A549 (cell line): ENCODE measurements at regions of chr3 and their contacts with region 1.

Region 1: DNA sequence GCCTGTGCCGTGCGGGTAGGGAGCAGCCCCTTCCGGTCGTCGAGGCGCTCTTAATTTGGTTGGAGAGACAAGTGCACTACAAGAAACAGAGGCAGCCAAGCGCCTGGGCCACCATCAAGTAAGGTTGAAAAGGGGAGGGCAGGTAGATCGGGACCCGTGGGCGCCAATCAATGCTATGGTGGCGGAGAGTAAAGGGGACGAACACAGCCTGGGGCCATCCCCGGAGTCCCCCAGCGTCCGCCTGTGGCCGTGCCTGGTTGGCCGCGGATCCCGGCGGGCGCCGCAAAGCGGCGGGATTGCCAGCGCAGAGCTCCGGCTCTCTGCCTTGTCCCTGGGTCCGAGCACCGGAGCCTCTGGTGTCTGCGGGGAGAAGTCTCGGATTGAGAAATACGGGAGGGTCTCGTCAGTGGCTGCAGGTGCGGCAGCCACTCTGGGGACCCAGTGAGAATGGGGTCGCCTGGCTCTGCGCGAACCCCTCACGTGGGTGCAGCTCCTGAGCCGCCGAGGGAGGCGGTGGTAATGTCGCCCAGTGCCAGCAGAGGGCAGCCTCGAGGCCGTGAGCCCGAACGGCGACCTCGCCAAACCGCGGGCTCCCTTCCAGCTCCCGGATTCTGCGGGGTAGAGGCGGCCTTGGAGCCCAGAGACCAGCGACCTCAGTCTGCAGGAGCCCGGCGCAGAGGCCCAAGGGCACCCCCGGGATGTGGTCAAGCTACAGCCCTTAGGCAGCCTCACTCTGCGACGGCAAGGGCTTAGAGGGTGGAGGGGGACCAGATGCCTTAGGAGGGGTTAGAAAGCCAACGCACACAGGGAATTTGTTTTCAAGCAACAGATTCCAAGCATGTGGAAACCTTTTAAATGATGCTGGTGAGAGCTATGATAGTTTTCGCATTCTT is 10.8 kb downstream of the FOXL2 start:
- DNase-seq: peak; percentile 64 to 75
- ATAC-seq: peak; percentile 91
- H3K4me3 ChIP-seq: peak overlapping the region; percentile 45
- H3K27ac ChIP-seq: peak overlapping the region; percentile 69 to 93
- H3K4me1 ChIP-seq: no peaks in the 10 kb centered on the region
- CTCF ChIP-seq: peak; percentile 62
- EP300 ChIP-seq: no peak
- POLR2A ChIP-seq: peak; percentile 15; the same call in 1 of the 2 replicates
- RAD21 ChIP-seq: peak; percentile 45 to 47; a peak in 4 of 5 replicates

Region 2: DNA sequence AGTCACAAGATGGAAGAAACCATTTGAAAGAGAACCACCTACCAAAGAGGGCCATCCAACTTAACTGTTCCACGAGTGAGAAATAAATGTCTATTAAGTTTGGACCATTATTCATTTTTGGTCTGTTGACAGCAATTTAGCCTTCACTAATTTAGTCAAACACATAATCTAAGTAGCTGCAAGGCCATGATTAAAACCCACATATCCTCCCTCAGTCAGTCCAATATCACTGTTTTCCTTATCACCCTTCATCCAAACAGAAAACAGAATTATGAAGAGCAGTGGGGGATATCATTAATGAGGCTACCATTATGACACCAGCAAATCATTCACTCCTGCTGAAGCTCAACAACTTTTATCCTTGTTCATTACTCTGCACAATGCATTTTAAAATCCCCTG is 153.3 kb before region 1 on chr3:
- CTCF ChIA-PET with region 1: no interaction called
- POLR2A ChIA-PET with region 1: no interaction called
- DNase-seq: no peak
- ATAC-seq: no peak
- H3K4me3 ChIP-seq: no peak overlapping the region
- H3K27ac ChIP-seq: no peak overlapping the region
- H3K4me1 ChIP-seq: peaks cover 23% of the 10 kb centered on the region
- CTCF ChIP-seq: no peak
- EP300 ChIP-seq: no peak
- POLR2A ChIP-seq: no peak
- RAD21 ChIP-seq: no peak

Region 3: GRCh38 chr3:138888560-138888959 is 47.5 kb before region 1 on chr3:
- CTCF ChIA-PET with region 1: no interaction called
- POLR2A ChIA-PET with region 1: no interaction called
- DNase-seq: no peak
- ATAC-seq: no peak
- H3K4me3 ChIP-seq: no peak overlapping the region
- H3K27ac ChIP-seq: no peak overlapping the region
- H3K4me1 ChIP-seq: no peaks in the 10 kb centered on the region
- CTCF ChIP-seq: no peak
- EP300 ChIP-seq: no peak
- POLR2A ChIP-seq: no peak
- RAD21 ChIP-seq: no peak

Region 4: GRCh38 chr3:138946181-138947059 is 10.3 kb after region 1 on chr3:
- CTCF ChIA-PET with region 1: interaction called, 18 read pairs
- POLR2A ChIA-PET with region 1: interaction called, 8 read pairs
- DNase-seq: peak; percentile 35 to 75
- ATAC-seq: peak; percentile 71 to 77
- H3K4me3 ChIP-seq: peak overlapping the region; percentile 63
- H3K27ac ChIP-seq: peak overlapping the region; percentile 86 to 89
- H3K4me1 ChIP-seq: peaks cover 3% of the 10 kb centered on the region; the same call in 1 of the 3 replicates
- CTCF ChIP-seq: peak; percentile 39; the same call in 2 of the 3 replicates
- EP300 ChIP-seq: no peak
- POLR2A ChIP-seq: no peak
- RAD21 ChIP-seq: 0 out of 5 replicates have a peak, but pooled peaks of 1 of the 2 experiments have one; percentile 23

Region 5: DNA sequence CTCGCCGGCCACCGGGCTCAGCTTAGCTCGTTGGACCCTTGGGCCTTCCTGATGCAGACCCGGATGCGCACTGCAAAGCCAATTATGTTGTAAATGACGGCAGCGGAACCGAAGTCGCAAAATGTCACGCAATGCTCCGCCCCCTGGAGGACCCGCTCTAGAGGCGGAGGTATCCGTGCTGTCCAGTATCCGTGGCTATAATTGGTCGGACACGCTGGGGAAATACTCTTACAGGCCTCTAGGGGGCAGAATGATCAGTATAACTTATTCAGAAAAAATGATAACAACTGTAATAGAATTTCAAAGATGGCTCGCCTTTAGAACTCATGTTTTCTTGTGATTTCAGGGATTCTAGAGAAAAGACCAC is 84.8 kb after region 1 on chr3 and contains the start of gene PRR23B:
- CTCF ChIA-PET with region 1: no interaction called
- POLR2A ChIA-PET with region 1: no interaction called
- DNase-seq: peak in 1 of 2 experiments; percentile 12
- ATAC-seq: no peak
- H3K4me3 ChIP-seq: no peak within 1 kb of the TSS
- H3K27ac ChIP-seq: no peak within 1 kb of the TSS
- H3K4me1 ChIP-seq: no peaks in the 10 kb centered on the region
- CTCF ChIP-seq: no peak
- EP300 ChIP-seq: no peak
- POLR2A ChIP-seq: no peak
- RAD21 ChIP-seq: no peak
- polyA plus RNA-seq, gene PRR23B: not detected in 2 replicates